ENCODE measurements at regions of chr5 and their contacts with region 1.

Region 1: DNA sequence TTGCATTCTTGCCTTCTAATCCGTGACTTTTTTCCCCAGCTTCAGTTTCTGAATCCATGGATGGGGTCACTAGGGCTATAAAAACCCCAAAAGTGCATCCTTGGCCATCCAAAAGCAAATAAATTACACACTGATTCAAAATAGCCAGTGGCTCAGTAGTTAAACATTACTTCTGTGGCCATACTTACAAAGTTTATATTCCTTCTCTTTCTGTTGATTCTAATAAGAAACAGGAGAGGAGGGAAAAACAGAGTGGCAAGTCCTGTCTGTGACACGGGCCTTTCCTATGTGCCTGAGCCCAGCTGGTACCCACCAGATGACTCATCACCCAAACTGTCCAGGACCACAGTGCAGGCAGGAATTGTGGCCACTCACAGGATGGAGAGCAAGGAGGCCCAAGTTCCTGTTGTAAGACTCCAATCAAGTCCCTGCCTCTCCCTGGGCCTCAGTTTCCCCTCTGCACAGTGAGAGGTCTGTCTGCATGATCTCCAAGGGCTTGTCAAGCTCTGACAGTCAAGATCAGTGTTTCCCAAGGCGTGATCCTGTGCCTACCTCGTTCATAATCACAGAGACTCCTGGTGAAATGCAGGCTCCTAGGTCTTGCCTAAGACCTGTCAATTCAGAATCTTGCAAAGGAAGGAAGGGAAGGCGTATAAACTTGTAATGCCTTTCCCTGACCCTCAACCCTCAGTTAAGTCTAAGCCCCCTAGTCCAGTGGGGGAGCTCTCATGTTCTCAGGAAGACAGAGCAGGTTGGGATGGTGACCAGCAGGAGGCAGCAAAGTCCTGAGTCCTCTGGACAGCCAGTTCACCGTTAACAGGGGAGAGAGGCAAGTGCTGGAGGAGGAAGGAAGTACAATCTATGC is 29.5 kb downstream of the TNIP1 start:
- DNase-seq: peak; percentile 73 to 80 (median 78)
- ATAC-seq: peak; percentile 83 to 88 (median 84)
- H3K4me3 ChIP-seq: no peak overlapping the region
- H3K27ac ChIP-seq: no peak overlapping the region
- H3K4me1 ChIP-seq: no peaks in the 10 kb centered on the region
- H3K27me3 ChIP-seq: no peaks in the 10 kb centered on the region
- CTCF ChIP-seq: peak; percentile 81 to 87 (median 84)
- POLR2A ChIP-seq: no peak

Region 2: DNA sequence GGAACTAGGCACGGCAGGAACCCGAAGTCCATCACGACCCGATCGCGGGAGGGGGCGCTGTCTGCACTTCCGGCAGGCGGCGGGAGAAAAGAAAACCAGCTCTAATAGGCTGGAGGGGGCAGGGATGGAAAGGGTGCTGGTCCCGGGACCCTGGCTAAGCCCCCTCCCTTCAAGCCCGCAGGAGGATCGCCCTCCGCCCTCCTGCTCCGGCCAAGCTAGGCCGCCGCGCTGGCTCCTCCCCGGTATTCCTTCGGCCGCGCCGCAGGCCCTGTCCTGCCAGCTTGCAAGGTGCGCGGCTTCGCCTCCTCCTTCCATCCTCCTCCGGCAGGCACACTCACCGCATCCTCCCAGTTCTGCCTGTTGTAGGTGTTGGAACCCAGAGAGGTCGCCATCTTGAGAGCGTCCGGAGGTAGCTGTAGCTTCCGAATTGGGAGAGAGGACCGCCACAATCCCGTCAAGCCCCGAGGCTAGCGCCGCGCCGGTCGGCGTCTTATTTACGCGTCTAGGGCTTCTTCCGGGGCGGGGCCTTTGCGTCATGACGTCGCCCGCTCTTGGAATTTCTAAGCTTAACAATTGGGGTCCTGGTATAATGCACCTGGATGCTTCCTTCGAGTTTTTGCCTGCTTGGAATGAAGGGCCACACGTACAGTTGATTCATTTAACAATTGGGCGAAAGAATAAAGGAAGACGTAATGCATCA is 350.6 kb before region 1 on chr5 and contains the start of gene RBM22:
- intact Hi-C with region 1: no loop called
- DNase-seq: peak; percentile 94 to 95 (median 95)
- ATAC-seq: peak; percentile 99
- H3K4me3 ChIP-seq: peak within 1 kb of the TSS; percentile 84 to 100 (median 97)
- H3K27ac ChIP-seq: peak within 1 kb of the TSS; percentile 92 to 97 (median 95)
- H3K4me1 ChIP-seq: peaks cover 0 to 14% (median 4%) of the 10 kb centered on the region in 4 donors
- H3K27me3 ChIP-seq: no peaks in the 10 kb centered on the region
- CTCF ChIP-seq: peak; percentile 36 to 71 (median 64)
- POLR2A ChIP-seq: peak; percentile 90
- total RNA-seq, gene RBM22: 12.3 to 19.4 (median 17.7) TPM

Region 3: GRCh38 chr5:151002250-151002649 is 49.0 kb before region 1 on chr5:
- intact Hi-C with region 1: loop called in 1 of 2 experiments (anchors 5 kb)
- DNase-seq: no peak
- ATAC-seq: peak; percentile 32 to 50 (median 44)
- H3K4me3 ChIP-seq: no peak overlapping the region
- H3K27ac ChIP-seq: no peak overlapping the region
- H3K4me1 ChIP-seq: peaks cover 0 to 58% (median 26%) of the 10 kb centered on the region in 4 donors
- H3K27me3 ChIP-seq: no peaks in the 10 kb centered on the region
- CTCF ChIP-seq: peak; percentile 51 to 86 (median 64)
- POLR2A ChIP-seq: no peak

Region 4: DNA sequence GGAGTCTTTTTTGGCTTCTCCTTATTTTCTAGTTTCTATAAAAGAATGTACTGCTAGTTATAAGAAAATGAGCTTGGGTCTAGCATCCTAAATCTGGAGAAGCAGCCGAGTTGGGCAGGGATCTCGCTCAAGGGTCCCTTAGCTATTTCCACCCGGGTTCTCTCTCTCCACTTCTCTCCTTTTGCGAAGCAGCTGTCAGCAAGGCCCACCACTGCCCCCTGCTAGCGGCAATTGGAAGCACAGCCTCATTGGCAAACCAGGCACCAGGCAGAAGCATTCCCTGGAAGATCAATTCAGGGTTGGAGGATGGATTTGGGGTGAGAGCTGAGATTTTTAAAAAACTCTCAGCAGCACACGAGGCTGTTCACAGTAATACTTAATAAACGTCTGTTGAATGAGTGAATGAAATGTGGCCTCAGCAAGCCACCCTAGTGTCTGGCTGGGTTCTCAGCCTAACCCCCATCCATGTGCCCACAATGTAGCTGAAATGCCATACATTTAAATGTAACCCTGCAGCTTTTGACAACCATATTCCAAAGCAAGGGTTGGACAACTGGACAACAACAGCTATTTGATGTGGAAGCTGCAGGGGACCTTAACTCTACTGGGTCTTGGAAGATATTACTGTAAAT is 64.1 kb after region 1 on chr5:
- intact Hi-C with region 1: loop called (anchors 5 kb)
- DNase-seq: peak; percentile 76 to 84 (median 81)
- ATAC-seq: peak; percentile 90 to 96 (median 93)
- H3K4me3 ChIP-seq: no peak overlapping the region
- H3K27ac ChIP-seq: no peak overlapping the region
- H3K4me1 ChIP-seq: peaks cover 0 to 3% (median 0%) of the 10 kb centered on the region in 4 donors
- H3K27me3 ChIP-seq: no peaks in the 10 kb centered on the region
- CTCF ChIP-seq: peak; percentile 86 to 94 (median 94)
- POLR2A ChIP-seq: no peak

Measured in right lobe of liver (tissue), 6 donors.